Posterior vena cava (tissue), 2 donors: ENCODE measurements at regions of chr6 and their contacts with region 1.

Region 1: GRCh38 chr6:129539032-129539431 is 170.9 kb downstream of the ARHGAP18 start:
- DNase-seq: no peak

Region 2: GRCh38 chr6:127824061-127824460 is 1715.0 kb before region 1 on chr6:
- intact Hi-C with region 1: loop called in 1 of 2 experiments (anchors 5 kb)
- DNase-seq: no peak

Region 3: DNA sequence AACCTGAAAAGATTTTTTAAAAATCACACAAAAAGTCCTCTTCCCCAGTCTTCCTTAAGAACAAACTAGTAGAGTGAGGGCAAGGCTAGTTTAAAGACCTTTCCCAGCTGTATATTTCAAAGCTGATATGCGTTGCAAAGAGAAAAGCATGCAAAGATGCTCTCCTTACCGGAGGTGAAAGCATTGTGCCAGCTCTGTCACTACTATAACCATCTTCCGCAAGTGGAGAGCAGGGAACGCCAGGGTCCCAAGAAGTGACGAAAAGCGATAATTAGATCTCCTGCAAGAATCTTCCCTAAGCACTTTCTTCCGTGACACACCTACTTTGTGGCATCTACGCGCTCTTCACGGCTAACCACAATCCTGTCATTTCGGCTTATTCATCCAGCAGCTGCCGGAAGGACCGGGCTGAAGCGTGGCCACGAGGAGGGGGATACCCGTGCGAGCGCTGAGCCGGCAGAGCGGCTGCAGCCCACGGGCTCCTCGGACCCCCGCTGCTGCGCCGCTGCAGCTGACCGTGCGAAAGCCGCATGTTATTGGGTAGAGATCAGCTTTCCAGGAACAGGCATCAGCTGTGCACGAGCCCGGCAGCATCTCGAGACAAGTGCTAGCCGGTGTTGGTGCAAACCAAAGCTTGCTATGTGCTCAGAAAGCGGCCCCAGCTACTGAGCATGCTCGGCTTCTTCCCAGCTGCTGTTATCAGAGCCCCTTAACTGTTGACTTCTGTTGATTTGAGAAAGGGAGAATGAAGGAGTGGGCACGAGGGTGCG is 228.1 kb after region 1 on chr6:
- intact Hi-C with region 1: no loop called
- DNase-seq: peak; percentile 80

Region 4: GRCh38 chr6:130453230-130453629 is 914.2 kb after region 1 on chr6:
- intact Hi-C with region 1: no loop called
- DNase-seq: no peak

Region 5: GRCh38 chr6:130796313-130796905 is 1257.4 kb after region 1 on chr6:
- intact Hi-C with region 1: no loop called
- DNase-seq: no peak